ENCODE measurements at regions of chr16 and their contacts with region 1.

Region 1: GRCh38 chr16:70380861-70381603 is 34.3 kb downstream of the DDX19A start:
- DNase-seq: peak; percentile 96
- H3K4me3 Mint-ChIP-seq: peak overlapping the region; percentile 99
- H3K27ac Mint-ChIP-seq: peak overlapping the region; percentile 99
- H3K4me1 Mint-ChIP-seq: peaks cover 5% of the 10 kb centered on the region
- H3K27me3 Mint-ChIP-seq: no peaks in the 10 kb centered on the region

Region 2: DNA sequence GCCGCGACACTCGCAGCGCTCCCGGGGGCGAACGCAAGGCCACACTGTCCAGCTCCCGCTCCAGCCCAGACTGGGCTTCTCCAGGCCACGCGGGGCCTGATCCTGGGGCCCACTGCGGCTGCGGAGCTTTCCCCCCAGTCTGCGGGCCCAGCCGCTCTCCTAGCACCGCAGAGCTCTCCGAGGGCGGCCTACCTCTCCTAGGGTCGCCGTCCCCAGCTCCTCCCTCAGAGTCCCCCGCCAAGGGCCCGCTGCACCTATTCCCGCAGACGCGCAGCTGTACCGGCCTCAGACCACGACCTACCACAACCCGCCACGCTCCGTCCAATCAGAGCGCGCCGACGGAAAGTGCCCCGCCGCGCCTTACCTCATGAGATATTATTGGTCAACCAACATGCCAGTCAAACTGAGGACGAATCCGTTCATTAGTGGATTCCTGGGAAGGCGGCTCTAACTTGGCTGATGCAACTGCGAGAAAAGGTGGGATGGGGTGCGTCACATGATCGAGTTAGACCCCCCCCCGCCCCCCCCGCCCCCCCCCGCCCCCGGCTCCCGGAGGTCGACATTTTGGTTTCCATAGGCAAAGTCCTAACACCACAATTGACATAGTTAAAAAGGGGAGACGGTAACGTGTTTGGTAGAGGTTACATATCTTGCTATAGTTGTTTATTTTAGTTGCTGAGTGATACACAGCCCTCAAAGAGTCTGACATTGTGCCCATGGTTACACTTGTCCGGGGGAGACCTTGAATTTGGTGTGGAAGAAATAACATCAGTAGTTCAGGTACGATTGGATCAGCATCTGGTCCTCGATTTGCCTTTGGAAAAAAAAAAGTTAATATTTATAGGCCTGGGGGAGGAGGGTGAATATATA is 91.6 kb before region 1 on chr16 and contains the start of gene AARS1:
- intact Hi-C with region 1: loop called (anchors 1 kb)
- DNase-seq: peak; percentile 95
- H3K4me3 Mint-ChIP-seq: peak within 1 kb of the TSS; percentile 96
- H3K27ac Mint-ChIP-seq: peak within 1 kb of the TSS; percentile 99
- H3K4me1 Mint-ChIP-seq: peaks cover 23% of the 10 kb centered on the region
- H3K27me3 Mint-ChIP-seq: no peaks in the 10 kb centered on the region
- total RNA-seq, gene AARS1: 109 and 111 TPM in 2 replicates

Region 3: DNA sequence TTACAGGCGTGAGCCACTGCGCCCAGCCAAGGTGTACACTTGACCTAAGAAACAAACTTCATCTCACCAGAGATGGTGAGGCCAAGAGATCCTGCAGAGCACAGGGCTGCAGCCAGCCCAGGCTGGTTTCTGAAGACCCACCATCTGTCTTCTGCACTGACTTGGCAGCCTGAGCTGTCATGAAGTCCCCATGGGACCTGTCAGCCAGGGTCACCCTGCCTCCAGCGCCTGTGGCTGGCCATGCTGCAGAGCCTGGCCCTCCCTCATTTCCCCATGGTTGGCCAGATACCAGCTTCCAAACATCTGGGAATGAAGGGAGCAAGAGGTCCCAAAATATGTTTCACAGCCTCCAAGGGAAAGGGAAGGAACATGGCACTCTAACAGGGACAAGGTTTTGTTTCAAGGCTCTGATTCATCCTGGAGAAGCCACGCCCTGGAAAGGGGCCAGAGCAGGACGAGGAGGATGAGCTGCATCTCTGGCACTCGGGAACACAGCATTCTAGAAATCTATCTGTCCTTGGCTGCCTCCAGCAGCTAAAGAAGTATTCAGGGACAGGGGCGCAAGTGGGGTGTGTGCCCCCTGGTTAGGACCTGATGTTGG is 10.9 kb after region 1 on chr16:
- intact Hi-C with region 1: no loop called
- DNase-seq: no peak
- H3K4me3 Mint-ChIP-seq: no peak overlapping the region
- H3K27ac Mint-ChIP-seq: no peak overlapping the region
- H3K4me1 Mint-ChIP-seq: no peaks in the 10 kb centered on the region
- H3K27me3 Mint-ChIP-seq: no peaks in the 10 kb centered on the region

Region 4: GRCh38 chr16:70402916-70403659 is 22.1 kb after region 1 on chr16:
- intact Hi-C with region 1: loop called (anchors 2 kb)
- DNase-seq: no peak
- H3K4me3 Mint-ChIP-seq: peak overlapping the region; percentile 10
- H3K27ac Mint-ChIP-seq: peak overlapping the region; percentile 92
- H3K4me1 Mint-ChIP-seq: peaks cover 43% of the 10 kb centered on the region
- H3K27me3 Mint-ChIP-seq: no peaks in the 10 kb centered on the region

Region 5: DNA sequence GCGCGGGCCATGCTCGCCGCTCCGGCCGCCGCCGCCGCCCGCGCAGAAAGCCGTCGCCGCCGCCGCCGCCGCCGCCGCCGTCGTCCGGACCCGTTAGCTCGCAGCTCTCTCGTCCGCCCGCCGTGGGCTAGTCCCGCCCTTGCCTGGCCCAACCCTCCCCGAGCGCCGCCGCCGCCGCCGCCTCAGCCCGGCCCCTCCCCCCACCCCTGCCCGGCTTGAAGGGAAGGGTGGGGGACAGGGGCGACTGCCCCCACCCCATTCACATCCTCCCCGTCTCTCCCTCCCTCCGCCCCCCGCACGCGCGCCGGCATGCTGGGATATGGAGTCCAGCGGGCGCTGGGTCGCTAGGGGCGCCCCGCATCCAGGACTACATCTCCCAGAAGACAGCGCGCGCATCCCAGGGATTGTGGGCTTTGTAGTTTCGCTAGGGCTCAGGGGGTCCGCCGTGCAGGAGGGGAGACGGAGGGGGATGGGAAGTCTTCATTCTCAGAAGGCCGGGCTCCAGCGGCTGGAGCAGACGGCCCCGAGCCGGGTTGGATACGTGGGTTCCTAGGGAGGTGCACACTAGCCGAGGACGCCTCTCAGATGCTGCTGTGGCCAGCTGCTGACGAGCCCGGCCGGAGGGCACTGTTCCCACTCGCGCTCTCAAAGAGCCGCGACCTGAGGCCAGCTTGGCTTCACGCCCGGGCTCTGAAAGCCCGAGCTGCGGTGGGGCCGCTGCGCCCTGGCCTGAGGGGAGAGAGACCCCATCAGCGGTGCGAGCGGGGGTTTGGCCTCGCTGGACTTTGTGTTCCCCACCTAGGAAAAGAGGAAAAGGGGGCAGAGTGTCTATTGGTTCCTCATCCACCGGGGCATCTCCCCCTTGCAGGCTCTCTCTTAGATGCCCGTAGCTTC is 58.2 kb after region 1 on chr16 and contains the start of gene ST3GAL2:
- intact Hi-C with region 1: loop called (anchors 1 kb)
- DNase-seq: peak; percentile 92
- H3K4me3 Mint-ChIP-seq: peak within 1 kb of the TSS; percentile 98
- H3K27ac Mint-ChIP-seq: peak within 1 kb of the TSS; percentile 92
- H3K4me1 Mint-ChIP-seq: peaks cover 28% of the 10 kb centered on the region
- H3K27me3 Mint-ChIP-seq: no peaks in the 10 kb centered on the region
- total RNA-seq, gene ST3GAL2: 35.6 and 37.7 TPM in 2 replicates

Region 6: GRCh38 chr16:70470927-70471341 is 89.9 kb after region 1 on chr16:
- intact Hi-C with region 1: loop called (anchors 1 kb)
- DNase-seq: no peak
- H3K4me3 Mint-ChIP-seq: no peak overlapping the region
- H3K27ac Mint-ChIP-seq: no peak overlapping the region
- H3K4me1 Mint-ChIP-seq: no peaks in the 10 kb centered on the region
- H3K27me3 Mint-ChIP-seq: no peaks in the 10 kb centered on the region

Region 7: DNA sequence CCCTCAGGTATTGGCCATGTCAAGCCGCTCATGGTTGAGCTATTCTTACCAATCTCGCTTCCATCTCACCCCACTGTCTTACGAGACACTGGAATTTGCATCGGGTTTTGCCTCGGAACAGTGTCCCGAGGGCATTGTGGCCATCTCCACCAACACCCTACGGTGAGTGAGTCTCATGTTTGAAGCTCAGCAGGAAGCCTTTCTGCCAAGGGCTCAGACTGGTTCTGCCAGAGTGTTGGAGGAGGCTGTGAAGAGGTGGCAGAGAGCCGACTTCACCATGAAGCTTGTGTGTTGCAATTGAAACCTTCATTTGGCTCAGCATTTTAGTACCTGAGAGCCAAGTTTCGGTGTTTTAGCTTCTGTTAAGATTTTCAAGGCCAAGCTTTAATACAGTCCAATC is 180.6 kb after region 1 on chr16:
- intact Hi-C with region 1: no loop called
- DNase-seq: no peak
- H3K4me3 Mint-ChIP-seq: no peak overlapping the region
- H3K27ac Mint-ChIP-seq: no peak overlapping the region
- H3K4me1 Mint-ChIP-seq: no peaks in the 10 kb centered on the region
- H3K27me3 Mint-ChIP-seq: no peaks in the 10 kb centered on the region